ENCODE measurements at regions of chr17 and their contacts with region 1.

Region 1: DNA sequence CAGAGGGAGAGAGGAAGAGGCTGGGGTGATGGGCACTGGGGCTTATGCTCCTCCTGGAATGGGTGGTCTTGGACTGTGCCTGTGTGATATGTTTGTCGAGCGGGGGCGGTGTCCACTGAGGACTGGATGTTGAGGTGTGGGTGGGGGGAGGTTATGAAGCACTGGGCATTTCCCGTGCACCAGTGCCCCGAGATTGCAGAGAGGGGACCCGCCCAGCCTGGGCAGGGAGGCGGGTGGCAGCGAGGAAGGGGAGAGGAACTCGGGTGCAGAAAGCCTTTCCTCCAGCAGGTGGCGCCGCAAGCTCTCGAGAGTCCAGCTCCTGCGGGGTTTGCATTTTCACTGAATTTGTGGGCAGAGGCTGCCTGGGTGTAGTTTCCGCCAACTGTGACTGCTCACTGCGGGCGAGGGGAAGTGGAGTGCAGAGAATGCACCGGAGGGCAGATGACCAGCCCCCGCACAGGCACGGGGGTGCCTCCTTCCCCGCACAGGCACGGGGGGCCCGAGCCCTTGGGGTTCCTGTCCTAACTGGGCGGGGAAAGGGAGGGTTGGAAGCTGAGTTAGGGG is 190.6 kb downstream of the SEC14L1 start:
- DNase-seq: peak; percentile 86
- ATAC-seq: peak; percentile 74 to 84
- H3K4me3 ChIP-seq: peak overlapping the region; percentile 26 to 42 (median 34)
- H3K27ac ChIP-seq: peak overlapping the region in 3 of 4 donors; percentile 51 to 61 (median 54)
- H3K4me1 ChIP-seq: peaks cover 17 to 37% of the 10 kb centered on the region in 2 donors
- H3K27me3 ChIP-seq: no peaks in the 10 kb centered on the region
- CTCF ChIP-seq: peak; percentile 87 to 97 (median 96)
- POLR2A ChIP-seq: no peak

Region 2: DNA sequence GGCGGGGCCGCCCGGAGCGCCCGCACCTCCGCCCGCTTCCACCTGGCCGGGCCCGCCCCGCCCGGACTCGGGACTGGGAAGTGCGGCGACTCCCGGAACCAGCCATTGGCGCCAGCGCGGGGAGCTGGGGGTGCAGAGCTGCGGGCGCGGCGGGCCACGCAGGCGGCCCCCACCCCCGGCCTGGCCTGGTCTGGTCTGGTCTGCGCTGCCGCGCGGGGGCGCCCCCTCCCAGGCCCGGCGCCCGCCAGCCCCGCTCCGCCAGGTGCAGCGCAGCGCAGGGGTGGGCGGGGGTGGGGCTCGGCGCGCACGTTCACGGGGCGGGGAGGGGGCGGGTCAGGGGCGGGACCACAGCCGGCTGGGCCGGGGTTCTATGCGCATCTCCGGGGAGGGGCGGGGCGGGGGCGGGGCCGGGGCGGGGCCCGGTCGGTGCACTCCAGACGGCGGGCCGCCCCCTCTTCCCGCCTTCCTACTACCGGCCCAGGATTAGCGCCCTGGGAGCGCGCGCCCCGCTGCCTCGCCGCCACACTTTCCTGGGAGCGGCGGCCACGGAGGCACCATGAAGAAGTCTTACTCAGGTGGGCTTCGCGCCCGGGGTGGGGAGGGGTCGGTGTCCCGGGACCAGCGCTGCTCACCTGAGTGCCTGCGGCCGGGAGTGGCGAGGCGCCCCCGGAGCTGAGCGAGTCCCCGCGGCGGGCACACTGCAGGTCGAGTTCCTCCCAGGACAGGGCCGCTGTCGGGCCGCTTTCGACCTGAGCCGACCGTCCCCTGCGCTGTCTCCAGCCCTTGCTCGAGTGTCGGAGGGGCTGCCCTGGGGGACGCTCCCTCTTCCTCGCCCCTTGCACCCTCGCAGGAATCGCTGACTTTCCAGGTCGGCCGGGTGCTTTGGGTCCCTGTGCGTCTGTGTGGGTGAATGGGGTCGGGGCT is 50.1 kb before region 1 on chr17:
- in situ Hi-C with region 1: no loop called
- intact Hi-C with region 1: loop called (anchors 2 kb)
- DNase-seq: peak in 1 of 2 donors; percentile 53
- ATAC-seq: peak; percentile 80 to 84
- H3K4me3 ChIP-seq: peak overlapping the region; percentile 63 to 70 (median 68)
- H3K27ac ChIP-seq: peak overlapping the region in 3 of 4 donors; percentile 47 to 64 (median 51)
- H3K4me1 ChIP-seq: peaks cover 26 to 28% of the 10 kb centered on the region in 2 donors
- H3K27me3 ChIP-seq: peaks cover 0 to 3% (median 0%) of the 10 kb centered on the region in 3 donors
- CTCF ChIP-seq: peak in 3 of 5 experiments; percentile 57 to 66 (median 59)
- POLR2A ChIP-seq: peak in 1 of 2 donors; percentile 26

Region 3: DNA sequence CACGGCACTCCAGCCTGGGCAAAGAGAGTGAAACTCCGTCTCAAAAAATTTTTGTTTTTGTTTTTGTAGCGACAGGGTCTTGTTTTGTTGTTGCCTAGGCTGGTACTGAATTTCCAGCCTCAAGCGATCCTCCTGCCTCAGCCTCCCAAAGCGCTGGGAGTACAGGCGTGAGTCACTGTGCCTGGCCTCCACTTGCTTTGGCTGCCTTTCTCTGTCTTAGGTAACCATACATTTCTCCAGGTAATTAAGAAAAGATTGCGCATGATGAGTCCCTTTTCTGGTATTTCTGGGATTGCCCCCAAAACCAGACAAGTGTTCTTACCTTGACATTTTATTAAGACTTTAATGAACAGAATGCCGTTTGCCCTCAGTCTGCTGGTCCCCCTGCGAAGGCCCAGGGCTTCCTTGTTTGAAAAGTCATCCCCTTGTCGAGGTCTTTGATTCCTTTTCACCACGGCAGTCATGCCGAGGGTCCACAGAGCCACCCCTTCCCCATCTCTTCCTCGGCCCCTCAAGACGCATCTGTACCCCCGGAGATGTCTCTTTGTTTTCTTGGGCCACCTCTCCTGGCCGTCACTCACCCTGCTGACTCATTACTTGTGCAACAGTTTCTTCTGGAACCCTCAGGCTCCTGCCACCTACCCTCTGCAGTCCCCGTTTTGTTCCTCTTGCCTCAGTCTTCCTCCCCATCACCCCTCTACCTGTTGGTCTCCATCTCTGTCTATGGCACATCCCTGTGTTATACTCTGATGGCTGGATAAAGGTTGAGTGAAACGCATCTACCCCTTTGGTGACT is 39.6 kb before region 1 on chr17:
- in situ Hi-C with region 1: no loop called
- intact Hi-C with region 1: no loop called
- DNase-seq: no peak
- ATAC-seq: no peak
- H3K4me3 ChIP-seq: no peak overlapping the region
- H3K27ac ChIP-seq: no peak overlapping the region
- H3K4me1 ChIP-seq: peaks cover 24 to 28% of the 10 kb centered on the region in 2 donors
- H3K27me3 ChIP-seq: no peaks in the 10 kb centered on the region
- CTCF ChIP-seq: no peak
- POLR2A ChIP-seq: no peak

Region 4: GRCh38 chr17:77372444-77373298 is 41.3 kb after region 1 on chr17:
- in situ Hi-C with region 1: no loop called
- intact Hi-C with region 1: loop called (anchors 5 kb)
- DNase-seq: peak; percentile 56
- ATAC-seq: peak; percentile 22 to 24
- H3K4me3 ChIP-seq: peak overlapping the region; percentile 72 to 87 (median 78)
- H3K27ac ChIP-seq: peak overlapping the region; percentile 85 to 96 (median 89)
- H3K4me1 ChIP-seq: peaks cover 57 to 72% of the 10 kb centered on the region in 2 donors
- H3K27me3 ChIP-seq: no peaks in the 10 kb centered on the region
- CTCF ChIP-seq: no peak
- POLR2A ChIP-seq: no peak

Region 5: GRCh38 chr17:77429919-77430752 is 98.8 kb after region 1 on chr17:
- in situ Hi-C with region 1: loop called in 2 of 4 experiments (anchors 10 kb)
- intact Hi-C with region 1: loop called (anchors 1 kb)
- DNase-seq: peak; percentile 70 to 87
- ATAC-seq: peak; percentile 55 to 69
- H3K4me3 ChIP-seq: no peak overlapping the region
- H3K27ac ChIP-seq: peak overlapping the region; percentile 56 to 92 (median 76)
- H3K4me1 ChIP-seq: peaks cover 63 to 80% of the 10 kb centered on the region in 2 donors
- H3K27me3 ChIP-seq: no peaks in the 10 kb centered on the region
- CTCF ChIP-seq: peak; percentile 60 to 83 (median 80)
- POLR2A ChIP-seq: no peak

Measured in gastrocnemius medialis (tissue), 4 donors.